ENCODE measurements at regions of chr9 and their contacts with region 1.

Region 1: DNA sequence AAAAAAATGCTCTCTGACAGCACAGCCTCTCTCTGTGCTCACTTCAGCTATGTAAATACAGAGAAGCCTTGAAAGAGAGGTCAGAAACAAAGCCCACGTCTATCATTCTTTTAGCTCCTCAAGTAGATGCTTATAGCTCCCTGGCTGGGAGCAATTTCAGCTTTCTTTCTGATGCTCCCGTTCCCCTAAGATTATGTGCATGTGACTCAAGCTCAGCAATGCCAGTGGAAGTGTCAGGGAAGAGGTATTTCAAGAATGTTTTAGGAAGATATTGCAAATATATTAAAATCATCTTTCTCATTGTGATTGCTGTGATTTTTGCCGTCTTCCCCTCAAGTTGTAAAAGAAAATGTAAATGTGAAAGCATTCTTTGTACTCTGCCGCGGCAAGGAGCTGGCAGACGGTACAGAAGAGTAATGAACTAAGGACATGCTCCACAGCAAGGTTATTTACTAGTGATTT is 1353.7 kb upstream of the ACO1 start:
- DNase-seq: no peak
- H3K4me3 ChIP-seq: no peak overlapping the region
- H3K27ac ChIP-seq: no peak overlapping the region
- H3K4me1 ChIP-seq: no peaks in the 10 kb centered on the region
- H3K27me3 ChIP-seq: no peaks in the 10 kb centered on the region
- CTCF ChIP-seq: no peak
- EP300 ChIP-seq: no peak
- POLR2A ChIP-seq: no peak

Region 2: DNA sequence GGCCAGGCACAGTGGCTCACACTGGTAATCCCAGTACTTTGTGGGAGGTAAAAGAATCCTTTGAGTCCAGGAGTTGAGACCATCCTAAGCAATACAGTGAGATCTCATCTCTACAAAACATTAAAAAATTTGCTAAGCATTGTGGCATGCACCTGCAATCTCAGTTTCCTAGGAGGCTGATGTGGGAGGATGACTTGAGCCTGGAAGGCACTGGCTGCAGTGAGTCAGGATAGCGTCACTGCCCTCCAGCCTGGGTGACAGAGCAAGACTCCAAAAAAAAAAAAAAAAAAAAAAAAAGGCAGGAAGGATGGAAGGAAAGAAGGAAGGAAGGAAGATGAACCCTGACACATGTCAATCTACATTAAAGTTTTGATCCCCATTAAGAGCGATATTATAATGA is 98.5 kb before region 1 on chr9:
- in situ Hi-C with region 1: loop called in 1 of 4 experiments (anchors 25 kb)
- intact Hi-C with region 1: no loop called
- DNase-seq: no peak
- H3K4me3 ChIP-seq: no peak overlapping the region
- H3K27ac ChIP-seq: no peak overlapping the region
- H3K4me1 ChIP-seq: no peaks in the 10 kb centered on the region
- H3K27me3 ChIP-seq: no peaks in the 10 kb centered on the region
- CTCF ChIP-seq: no peak
- EP300 ChIP-seq: no peak
- POLR2A ChIP-seq: no peak

Measured in transverse colon (tissue), 4 donors.